Naive thymus-derived CD4-positive, alpha-beta T cell (primary cell): ENCODE measurements at regions of chr1 and their contacts with region 1.

Region 1: GRCh38 chr1:66253330-66253921 is 280.5 kb upstream of the SGIP1 start:
- DNase-seq: peak in 6 of 9 donors; percentile 29 to 58 (median 46)
- ATAC-seq: peak; percentile 83
- H3K4me3 ChIP-seq: no peak overlapping the region
- H3K4me3 Mint-ChIP-seq: no peak overlapping the region
- H3K27ac ChIP-seq: no peak overlapping the region
- H3K27ac Mint-ChIP-seq: peak overlapping the region in 2 of 9 donors; percentile 19 to 64
- H3K4me1 ChIP-seq: peaks cover 10 to 12% of the 10 kb centered on the region in 2 donors
- H3K4me1 Mint-ChIP-seq: peaks cover 6 to 57% (median 19%) of the 10 kb centered on the region in 7 donors
- H3K27me3 ChIP-seq: no peaks in the 10 kb centered on the region
- H3K27me3 Mint-ChIP-seq: no peaks in the 10 kb centered on the region

Region 2: GRCh38 chr1:65958561-65959350 is 294.7 kb before region 1 on chr1:
- CTCF ChIA-PET with region 1: interaction called, 6 read pairs
- POLR2A ChIA-PET with region 1: no interaction called
- intact Hi-C with region 1: loop called in 1 of 2 experiments (anchors 2 kb)
- DNase-seq: peak in 7 of 9 donors; percentile 23 to 75 (median 64)
- ATAC-seq: peak; percentile 80
- H3K4me3 ChIP-seq: no peak overlapping the region
- H3K4me3 Mint-ChIP-seq: no peak overlapping the region
- H3K27ac ChIP-seq: no peak overlapping the region
- H3K27ac Mint-ChIP-seq: no peak overlapping the region
- H3K4me1 ChIP-seq: no peaks in the 10 kb centered on the region
- H3K4me1 Mint-ChIP-seq: peaks cover 0 to 12% (median 0%) of the 10 kb centered on the region in 7 donors
- H3K27me3 ChIP-seq: no peaks in the 10 kb centered on the region
- H3K27me3 Mint-ChIP-seq: peaks cover 0 to 7% (median 3%) of the 10 kb centered on the region in 5 donors

Region 3: DNA sequence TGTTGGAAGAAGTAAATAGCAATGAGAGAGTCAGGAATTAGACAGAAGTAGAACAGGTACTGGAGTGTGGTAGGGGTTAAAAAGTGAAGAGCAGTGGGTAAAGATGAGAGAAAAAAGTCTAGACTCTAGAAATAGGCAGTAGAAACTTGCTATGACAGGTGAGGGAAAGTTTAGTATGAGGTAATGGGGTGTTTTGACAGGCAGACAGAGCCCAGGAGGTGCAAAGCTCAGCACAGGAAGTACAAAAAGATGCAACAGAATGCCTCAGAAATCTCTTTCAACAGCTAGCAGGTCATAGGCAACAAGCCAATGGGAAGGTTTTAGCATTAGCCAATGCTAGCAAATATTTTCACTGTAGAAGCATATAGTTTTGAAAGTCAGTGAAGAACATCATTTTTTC is 38.5 kb before region 1 on chr1:
- CTCF ChIA-PET with region 1: no interaction called
- POLR2A ChIA-PET with region 1: no interaction called
- intact Hi-C with region 1: no loop called
- DNase-seq: peak in 7 of 9 donors; percentile 33 to 85 (median 69)
- ATAC-seq: peak; percentile 94
- H3K4me3 ChIP-seq: no peak overlapping the region
- H3K4me3 Mint-ChIP-seq: peak overlapping the region in 5 of 10 donors; percentile 5 to 21 (median 14)
- H3K27ac ChIP-seq: peak overlapping the region; percentile 50
- H3K27ac Mint-ChIP-seq: peak overlapping the region; percentile 29 to 87 (median 49)
- H3K4me1 ChIP-seq: peaks cover 0 to 4% of the 10 kb centered on the region in 2 donors
- H3K4me1 Mint-ChIP-seq: peaks cover 5 to 18% (median 15%) of the 10 kb centered on the region in 7 donors
- H3K27me3 ChIP-seq: no peaks in the 10 kb centered on the region
- H3K27me3 Mint-ChIP-seq: peaks cover 0 to 5% (median 0%) of the 10 kb centered on the region in 5 donors

Region 4: DNA sequence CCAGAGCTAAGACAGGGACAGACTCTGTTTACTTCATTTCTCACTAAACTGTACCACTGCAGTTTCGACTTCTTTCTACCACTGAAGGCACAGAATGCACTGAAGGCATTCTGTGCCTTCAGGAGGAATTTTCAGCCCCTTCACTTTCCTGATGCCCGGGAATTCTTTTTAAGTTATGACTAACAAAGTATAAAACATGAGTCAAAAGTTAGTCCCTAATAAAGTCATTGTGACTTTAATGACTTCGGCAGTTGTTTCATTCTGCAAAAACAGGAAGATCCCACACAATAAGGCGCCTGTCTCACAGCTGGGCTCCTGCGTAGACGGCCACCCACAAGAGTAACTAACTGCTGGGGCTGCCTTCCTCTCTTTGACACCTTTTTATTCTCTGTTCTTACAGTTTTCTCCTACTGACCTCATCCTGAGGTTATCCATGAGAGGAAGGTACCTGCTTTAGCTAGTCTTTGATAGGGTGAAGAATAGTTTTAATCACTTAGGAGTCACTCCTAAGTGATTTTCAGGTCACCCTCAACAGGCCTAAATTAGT is 96.6 kb after region 1 on chr1:
- CTCF ChIA-PET with region 1: interaction called, 3 read pairs
- POLR2A ChIA-PET with region 1: no interaction called
- intact Hi-C with region 1: loop called in 1 of 2 experiments (anchors 2 kb)
- DNase-seq: peak in 7 of 9 donors; percentile 55 to 77 (median 71)
- ATAC-seq: peak; percentile 84
- H3K4me3 ChIP-seq: peak overlapping the region; percentile 33
- H3K4me3 Mint-ChIP-seq: peak overlapping the region; percentile 70 to 86 (median 77)
- H3K27ac ChIP-seq: peak overlapping the region; percentile 62
- H3K27ac Mint-ChIP-seq: peak overlapping the region; percentile 81 to 95 (median 90)
- H3K4me1 ChIP-seq: peaks cover 74 to 78% of the 10 kb centered on the region in 2 donors
- H3K4me1 Mint-ChIP-seq: peaks cover 66 to 100% (median 96%) of the 10 kb centered on the region in 7 donors
- H3K27me3 ChIP-seq: no peaks in the 10 kb centered on the region
- H3K27me3 Mint-ChIP-seq: no peaks in the 10 kb centered on the region

Region 5: GRCh38 chr1:66480162-66480561 is 226.7 kb after region 1 on chr1:
- CTCF ChIA-PET with region 1: no interaction called
- POLR2A ChIA-PET with region 1: no interaction called
- intact Hi-C with region 1: no loop called
- DNase-seq: no peak
- ATAC-seq: no peak
- H3K4me3 ChIP-seq: no peak overlapping the region
- H3K4me3 Mint-ChIP-seq: no peak overlapping the region
- H3K27ac ChIP-seq: no peak overlapping the region
- H3K27ac Mint-ChIP-seq: no peak overlapping the region
- H3K4me1 ChIP-seq: no peaks in the 10 kb centered on the region
- H3K4me1 Mint-ChIP-seq: no peaks in the 10 kb centered on the region
- H3K27me3 ChIP-seq: peaks cover 0 to 4% of the 10 kb centered on the region in 2 donors
- H3K27me3 Mint-ChIP-seq: peaks cover 0 to 30% (median 17%) of the 10 kb centered on the region in 5 donors

Region 6: DNA sequence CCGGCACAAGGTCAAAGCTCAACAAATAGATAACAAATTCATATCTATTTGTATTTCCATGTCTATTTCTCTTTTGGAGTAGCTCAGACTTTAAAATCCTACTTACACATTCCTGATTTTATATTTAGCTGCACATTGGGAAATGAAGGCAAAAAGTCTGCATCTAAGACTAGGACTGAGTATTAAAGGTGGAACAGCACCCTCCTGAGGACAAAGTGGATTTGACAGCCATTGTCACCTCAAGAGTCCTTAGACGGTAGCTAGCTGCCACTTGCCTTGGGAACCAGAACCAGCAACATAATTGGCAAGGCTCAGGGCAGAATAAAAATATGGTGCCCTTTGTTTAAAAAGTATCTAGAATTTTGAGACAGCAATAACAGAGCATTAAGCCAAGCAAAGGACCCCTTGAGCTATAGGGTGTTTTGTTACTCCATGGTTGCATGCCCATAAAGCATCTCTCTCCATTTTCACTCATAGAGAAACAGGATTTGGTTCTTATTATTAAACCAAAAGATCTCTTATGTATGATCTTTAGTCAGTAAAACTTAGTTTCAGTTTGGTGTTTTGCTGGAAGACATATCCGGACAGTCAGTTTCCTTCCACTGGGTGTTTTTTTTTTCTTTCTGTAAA is 250.5 kb after region 1 on chr1:
- CTCF ChIA-PET with region 1: no interaction called
- POLR2A ChIA-PET with region 1: no interaction called
- intact Hi-C with region 1: loop called (anchors 2 to 5 kb)
- DNase-seq: peak in 6 of 9 donors; percentile 2 to 24 (median 10)
- ATAC-seq: peak; percentile 60
- H3K4me3 ChIP-seq: no peak overlapping the region
- H3K4me3 Mint-ChIP-seq: no peak overlapping the region
- H3K27ac ChIP-seq: no peak overlapping the region
- H3K27ac Mint-ChIP-seq: no peak overlapping the region
- H3K4me1 ChIP-seq: no peaks in the 10 kb centered on the region
- H3K4me1 Mint-ChIP-seq: no peaks in the 10 kb centered on the region
- H3K27me3 ChIP-seq: no peaks in the 10 kb centered on the region
- H3K27me3 Mint-ChIP-seq: peaks cover 31 to 53% (median 43%) of the 10 kb centered on the region in 5 donors